GM12878 (cell line): ENCODE measurements at regions of chr9 and their contacts with region 1.

Region 1: GRCh38 chr9:112546149-112547012 is 59.8 kb downstream of the KIAA1958 start:
- DNase-seq: no peak
- ATAC-seq: peak; percentile 86
- H3K4me3 ChIP-seq: no peak overlapping the region
- H3K27ac ChIP-seq: no peak overlapping the region
- H3K4me1 ChIP-seq: no peaks in the 10 kb centered on the region
- H3K27me3 ChIP-seq: no peaks in the 10 kb centered on the region
- CTCF ChIP-seq: no peak
- EP300 ChIP-seq: no peak
- POLR2A ChIP-seq: no peak
- RAD21 ChIP-seq: no peak

Region 2: DNA sequence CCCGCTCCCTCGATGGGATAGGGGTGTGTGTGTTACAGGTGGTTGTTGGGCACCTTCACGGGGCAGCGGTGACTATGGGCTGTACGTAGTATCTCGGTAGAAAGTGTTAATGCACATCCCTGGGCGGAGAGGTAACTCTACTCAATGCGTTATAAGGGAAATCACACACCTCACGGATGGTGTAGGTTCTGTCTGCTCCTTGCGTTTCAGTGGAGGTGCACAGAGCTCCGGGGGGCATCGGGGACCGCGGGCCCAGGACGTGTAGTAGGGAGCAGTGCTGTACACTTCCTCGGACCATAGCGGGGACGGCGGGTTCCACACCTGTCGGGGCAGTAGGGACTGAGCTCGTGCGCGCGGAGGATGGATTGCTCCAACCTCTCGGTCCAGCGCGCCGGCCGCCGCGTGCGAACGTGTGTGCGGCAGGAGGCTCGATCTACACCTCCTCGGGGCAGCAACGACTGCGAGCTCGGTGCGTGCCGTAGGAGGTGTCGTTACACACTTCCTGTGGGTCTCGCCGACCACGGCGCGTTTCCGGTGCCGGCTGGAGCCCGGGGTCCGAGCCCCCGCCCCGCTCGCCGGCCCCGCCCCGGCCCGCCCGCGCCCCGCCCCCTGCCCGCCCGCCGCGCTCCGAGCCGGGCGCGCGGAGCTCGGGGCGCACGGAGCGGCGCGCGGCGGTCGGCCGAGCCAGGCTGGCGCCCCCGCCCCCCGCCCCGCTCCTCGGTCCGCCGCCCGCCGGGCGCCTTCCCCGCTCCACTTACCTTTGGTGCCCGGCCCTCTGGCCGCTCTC is 60.0 kb before region 1 on chr9 and contains the start of gene KIAA1958:
- CTCF ChIA-PET with region 1: no interaction called
- POLR2A ChIA-PET with region 1: no interaction called
- RAD21 ChIA-PET with region 1: no interaction called
- SMC1A ChIA-PET with region 1: no interaction called
- in situ Hi-C with region 1: no loop called
- intact Hi-C with region 1: loop called (anchors 5 kb)
- DNase-seq: peak; percentile 40
- ATAC-seq: peak; percentile 92
- H3K4me3 ChIP-seq: peak within 1 kb of the TSS; percentile 70
- H3K27ac ChIP-seq: peak within 1 kb of the TSS; percentile 54
- H3K4me1 ChIP-seq: no peaks in the 10 kb centered on the region
- H3K27me3 ChIP-seq: no peaks in the 10 kb centered on the region
- CTCF ChIP-seq: no peak
- EP300 ChIP-seq: no peak
- POLR2A ChIP-seq: peak; percentile 100
- RAD21 ChIP-seq: no peak
- polyA plus RNA-seq, gene KIAA1958: 0.53 to 0.80 TPM